MCF 10A (cell line): ENCODE measurements at regions of chr6 and their contacts with region 1.

Region 1: GRCh38 chr6:154675602-154676088 is 57.6 kb upstream of the SCAF8 start:
- DNase-seq: peak; percentile 93
- H3K4me3 Mint-ChIP-seq: no peak overlapping the region
- H3K27ac Mint-ChIP-seq: no peak overlapping the region
- H3K4me1 Mint-ChIP-seq: no peaks in the 10 kb centered on the region
- H3K27me3 Mint-ChIP-seq: no peaks in the 10 kb centered on the region
- CTCF ChIP-seq: peak; percentile 98

Region 2: GRCh38 chr6:154276810-154277628 is 398.6 kb before region 1 on chr6:
- CTCF ChIA-PET with region 1: no interaction called
- POLR2A ChIA-PET with region 1: no interaction called
- intact Hi-C with region 1: loop called (anchors 10 kb)
- DNase-seq: peak; percentile 56
- H3K4me3 Mint-ChIP-seq: peak overlapping the region; percentile 44
- H3K27ac Mint-ChIP-seq: no peak overlapping the region
- H3K4me1 Mint-ChIP-seq: peaks cover 6% of the 10 kb centered on the region
- H3K27me3 Mint-ChIP-seq: no peaks in the 10 kb centered on the region
- CTCF ChIP-seq: peak; percentile 40

Region 3: GRCh38 chr6:154733012-154733625 is 57.5 kb after region 1 on chr6 and contains the start of gene SCAF8:
- CTCF ChIA-PET with region 1: interaction called, 20 read pairs
- POLR2A ChIA-PET with region 1: interaction called, 4 read pairs
- intact Hi-C with region 1: loop called (anchors 1 kb)
- DNase-seq: peak; percentile 79
- H3K4me3 Mint-ChIP-seq: peak within 1 kb of the TSS; percentile 97
- H3K27ac Mint-ChIP-seq: peak within 1 kb of the TSS; percentile 98
- H3K4me1 Mint-ChIP-seq: peaks cover 12% of the 10 kb centered on the region
- H3K27me3 Mint-ChIP-seq: no peaks in the 10 kb centered on the region
- CTCF ChIP-seq: peak; percentile 69
- total RNA-seq, gene SCAF8: 41.0 and 49.2 TPM in 2 replicates

Region 4: GRCh38 chr6:154868143-154868594 is 192.5 kb after region 1 on chr6:
- CTCF ChIA-PET with region 1: interaction called, 9 read pairs
- POLR2A ChIA-PET with region 1: no interaction called
- intact Hi-C with region 1: loop called (anchors 2 kb)
- DNase-seq: peak; percentile 66
- H3K4me3 Mint-ChIP-seq: no peak overlapping the region
- H3K27ac Mint-ChIP-seq: no peak overlapping the region
- H3K4me1 Mint-ChIP-seq: peaks cover 5% of the 10 kb centered on the region
- H3K27me3 Mint-ChIP-seq: no peaks in the 10 kb centered on the region
- CTCF ChIP-seq: peak; percentile 49

Region 5: DNA sequence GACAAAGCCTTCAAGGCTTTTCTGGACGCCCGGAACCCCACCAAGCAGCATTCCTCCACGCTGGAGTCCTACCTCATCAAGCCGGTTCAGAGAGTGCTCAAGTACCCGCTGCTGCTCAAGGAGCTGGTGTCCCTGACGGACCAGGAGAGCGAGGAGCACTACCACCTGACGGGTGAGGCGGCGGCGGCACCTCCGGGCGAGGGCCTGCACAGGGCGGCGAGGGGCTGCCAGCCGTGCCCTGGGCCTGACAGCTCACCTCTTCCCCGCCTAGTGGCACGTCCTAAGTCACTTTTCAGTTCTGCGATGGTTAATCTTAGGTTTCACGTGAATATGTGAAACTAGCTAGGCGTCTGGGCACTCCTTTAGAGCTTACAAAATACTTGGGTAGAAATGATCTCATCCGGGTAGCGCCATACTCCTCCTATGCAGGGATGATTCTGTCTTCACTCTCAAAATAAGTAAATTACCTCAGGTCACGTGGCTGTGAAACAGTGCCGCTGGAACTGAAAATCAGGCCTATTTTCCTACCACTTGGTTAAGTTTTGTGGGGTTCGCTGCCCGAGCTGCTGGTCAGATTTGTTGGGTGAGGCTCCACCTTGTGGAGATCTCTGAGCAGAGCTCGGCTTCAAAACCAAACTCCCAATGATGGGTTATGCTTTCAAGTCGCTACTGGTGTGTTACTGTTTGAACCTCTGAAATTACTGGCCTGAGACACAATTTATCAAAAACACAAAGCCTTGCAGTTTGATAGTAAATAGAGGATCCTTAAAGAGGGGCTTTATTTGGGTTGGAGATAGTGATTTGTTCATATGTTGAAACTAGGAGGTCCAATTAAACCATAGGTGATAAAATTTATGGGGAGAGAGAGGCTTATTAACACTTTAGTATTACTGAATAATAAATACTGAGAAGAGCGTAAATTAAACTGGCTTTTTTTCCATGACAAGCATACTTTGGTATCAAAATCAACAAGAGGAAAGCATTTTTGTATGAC is 572.7 kb after region 1 on chr6:
- CTCF ChIA-PET with region 1: interaction called, 3 read pairs
- POLR2A ChIA-PET with region 1: no interaction called
- intact Hi-C with region 1: loop called (anchors 5 kb)
- DNase-seq: peak; percentile 54
- H3K4me3 Mint-ChIP-seq: no peak overlapping the region
- H3K27ac Mint-ChIP-seq: peak overlapping the region; percentile 71
- H3K4me1 Mint-ChIP-seq: no peaks in the 10 kb centered on the region
- H3K27me3 Mint-ChIP-seq: no peaks in the 10 kb centered on the region
- CTCF ChIP-seq: peak; percentile 62